Breast epithelium (tissue), 4 donors: ENCODE measurements at regions of chr10 and their contacts with region 1.

Region 1: GRCh38 chr10:86182150-86182549 is 184.4 kb downstream of the GRID1 start:
- DNase-seq: no peak
- H3K4me3 ChIP-seq: no peak overlapping the region
- H3K27ac ChIP-seq: no peak overlapping the region
- H3K4me1 ChIP-seq: no peaks in the 10 kb centered on the region
- H3K27me3 ChIP-seq: no peaks in the 10 kb centered on the region
- CTCF ChIP-seq: no peak
- POLR2A ChIP-seq: no peak

Region 2: DNA sequence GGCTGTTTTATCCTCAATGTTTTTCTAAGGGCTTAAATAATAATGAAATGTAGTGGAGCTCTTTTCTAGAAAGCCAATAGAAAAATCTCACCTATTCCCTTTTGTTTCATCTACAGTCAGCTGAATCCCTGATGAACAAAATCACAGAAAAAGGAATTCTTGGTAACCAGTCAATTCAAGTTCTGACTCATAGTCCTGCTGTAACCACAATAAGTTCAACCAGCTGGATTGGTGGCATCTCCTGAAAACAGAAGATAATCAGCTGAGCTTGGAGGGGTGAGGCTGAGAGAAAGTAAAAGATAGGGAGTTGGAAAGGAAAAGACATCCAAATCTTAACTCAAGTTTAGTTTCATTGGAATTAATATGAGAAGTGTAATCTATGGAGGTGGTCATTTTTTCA is 1081.7 kb before region 1 on chr10:
- intact Hi-C with region 1: loop called (anchors 5 kb)
- DNase-seq: no peak
- H3K4me3 ChIP-seq: no peak overlapping the region
- H3K27ac ChIP-seq: no peak overlapping the region
- H3K4me1 ChIP-seq: no peaks in the 10 kb centered on the region
- H3K27me3 ChIP-seq: no peaks in the 10 kb centered on the region
- CTCF ChIP-seq: no peak
- POLR2A ChIP-seq: no peak

Region 3: GRCh38 chr10:85862771-85863170 is 319.4 kb before region 1 on chr10:
- intact Hi-C with region 1: no loop called
- DNase-seq: no peak
- H3K4me3 ChIP-seq: no peak overlapping the region
- H3K27ac ChIP-seq: no peak overlapping the region
- H3K4me1 ChIP-seq: no peaks in the 10 kb centered on the region
- H3K27me3 ChIP-seq: no peaks in the 10 kb centered on the region
- CTCF ChIP-seq: no peak
- POLR2A ChIP-seq: no peak

Region 4: DNA sequence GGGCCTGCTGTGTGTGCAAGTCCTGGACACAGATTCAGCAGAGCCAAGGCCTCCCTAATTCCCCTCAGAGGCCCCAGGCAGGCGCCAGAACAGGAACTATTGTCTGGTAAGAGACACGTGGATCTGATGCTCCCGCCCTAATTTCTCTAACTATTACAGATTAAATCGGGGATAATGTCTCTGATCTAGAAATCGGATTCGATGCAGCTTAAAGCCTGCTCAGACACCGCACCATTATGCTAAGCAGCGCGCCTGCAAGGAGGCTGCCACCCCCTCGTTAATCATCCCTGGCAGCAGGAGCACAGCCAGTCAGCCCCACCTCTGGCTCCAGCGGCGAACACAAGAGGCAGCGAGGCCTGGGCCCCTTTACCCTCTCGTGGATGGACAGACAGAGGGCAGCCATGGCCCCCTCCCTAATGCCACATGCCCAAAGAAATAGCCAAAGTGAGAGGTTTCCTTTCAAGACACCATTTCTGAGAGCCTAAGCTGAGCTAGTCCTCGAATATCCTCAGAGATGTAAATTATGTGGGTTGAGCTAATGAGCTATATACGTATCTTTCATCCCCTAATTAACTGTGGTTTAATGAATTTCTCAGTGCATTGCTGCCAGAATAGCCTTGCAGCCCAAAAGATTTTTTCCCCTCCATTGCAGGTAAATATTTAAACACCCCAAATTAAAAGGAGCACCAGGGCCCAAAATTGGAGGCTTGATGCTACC is 62.3 kb after region 1 on chr10:
- intact Hi-C with region 1: no loop called
- DNase-seq: no peak
- H3K4me3 ChIP-seq: no peak overlapping the region
- H3K27ac ChIP-seq: no peak overlapping the region
- H3K4me1 ChIP-seq: no peaks in the 10 kb centered on the region
- H3K27me3 ChIP-seq: no peaks in the 10 kb centered on the region
- CTCF ChIP-seq: no peak
- POLR2A ChIP-seq: no peak

Region 5: GRCh38 chr10:86399879-86400704 is 217.9 kb after region 1 on chr10:
- intact Hi-C with region 1: no loop called
- DNase-seq: peak; percentile 87 to 92
- H3K4me3 ChIP-seq: peak overlapping the region; percentile 52 to 77 (median 69)
- H3K27ac ChIP-seq: peak overlapping the region; percentile 84 to 92
- H3K4me1 ChIP-seq: no peaks in the 10 kb centered on the region
- H3K27me3 ChIP-seq: no peaks in the 10 kb centered on the region
- CTCF ChIP-seq: peak; percentile 63 to 90 (median 89)
- POLR2A ChIP-seq: no peak